ENCODE measurements at regions of chr19 and their contacts with region 1.

Region 1: GRCh38 chr19:11242864-11243797 is 3.7 kb downstream of the ANGPTL8 start:
- DNase-seq: peak; percentile 78
- ATAC-seq: peak; percentile 99
- H3K4me3 ChIP-seq: no peak overlapping the region
- H3K4me3 Mint-ChIP-seq: peak overlapping the region; percentile 27
- H3K27ac ChIP-seq: no peak overlapping the region
- H3K27ac Mint-ChIP-seq: no peak overlapping the region
- H3K4me1 ChIP-seq: peaks cover 3 to 4% of the 10 kb centered on the region in 2 donors
- H3K4me1 Mint-ChIP-seq: peaks cover 6% of the 10 kb centered on the region
- H3K27me3 ChIP-seq: peaks cover 0 to 3% (median 1%) of the 10 kb centered on the region in 4 experiments
- H3K27me3 Mint-ChIP-seq: no peaks in the 10 kb centered on the region
- CTCF ChIP-seq: peak; percentile 76

Region 2: DNA sequence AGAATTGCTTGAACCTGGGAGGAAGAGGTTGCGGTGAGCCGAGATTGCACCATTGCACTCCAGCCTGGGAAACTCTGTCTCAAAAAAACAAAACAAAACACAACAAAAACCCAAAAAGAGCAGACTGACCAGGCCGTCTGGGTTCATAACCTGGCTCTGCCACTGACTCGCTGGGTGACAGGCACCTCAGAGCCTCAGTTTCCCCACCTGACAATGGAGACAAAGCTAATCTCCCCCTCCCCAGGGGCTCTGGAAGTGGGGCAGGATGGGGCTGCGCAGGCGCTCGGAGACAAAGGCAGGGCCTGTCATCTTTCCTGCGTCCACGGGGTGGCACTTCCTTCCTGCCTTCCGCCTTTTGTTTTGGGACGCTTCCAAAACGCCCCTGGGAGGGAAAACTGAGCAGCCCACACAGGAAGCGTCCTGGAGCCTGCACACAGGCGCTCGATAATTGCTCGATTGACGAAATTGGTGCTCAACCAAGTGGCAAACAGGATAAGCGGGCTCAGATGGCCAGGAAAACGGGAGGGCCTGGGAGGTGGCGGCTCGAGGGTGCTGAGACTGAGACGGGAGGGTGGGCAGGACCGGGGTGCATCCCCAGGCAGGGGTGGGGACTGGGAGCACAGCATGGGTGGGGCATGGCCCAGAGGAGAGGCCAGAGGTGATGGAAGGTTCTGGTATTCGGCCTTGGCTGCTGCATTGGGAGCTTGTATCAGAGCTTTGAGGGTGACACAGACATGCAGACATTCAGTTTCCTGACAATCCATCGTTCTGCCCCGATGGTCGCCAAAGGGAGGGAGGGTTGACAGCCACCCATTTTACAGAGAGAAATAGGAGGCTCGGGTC is 105.4 kb before region 1 on chr19:
- CTCF ChIA-PET with region 1: no interaction called
- POLR2A ChIA-PET with region 1: no interaction called
- intact Hi-C with region 1: no loop called
- DNase-seq: peak; percentile 42
- ATAC-seq: peak; percentile 33
- H3K4me3 ChIP-seq: no peak overlapping the region
- H3K4me3 Mint-ChIP-seq: peak overlapping the region; percentile 49
- H3K27ac ChIP-seq: no peak overlapping the region
- H3K27ac Mint-ChIP-seq: no peak overlapping the region
- H3K4me1 ChIP-seq: peaks cover 7 to 17% of the 10 kb centered on the region in 2 donors
- H3K4me1 Mint-ChIP-seq: peaks cover 12% of the 10 kb centered on the region
- H3K27me3 ChIP-seq: peaks cover 0 to 39% (median 8%) of the 10 kb centered on the region in 4 experiments
- H3K27me3 Mint-ChIP-seq: peaks cover 19% of the 10 kb centered on the region
- CTCF ChIP-seq: peak; percentile 39

Region 3: DNA sequence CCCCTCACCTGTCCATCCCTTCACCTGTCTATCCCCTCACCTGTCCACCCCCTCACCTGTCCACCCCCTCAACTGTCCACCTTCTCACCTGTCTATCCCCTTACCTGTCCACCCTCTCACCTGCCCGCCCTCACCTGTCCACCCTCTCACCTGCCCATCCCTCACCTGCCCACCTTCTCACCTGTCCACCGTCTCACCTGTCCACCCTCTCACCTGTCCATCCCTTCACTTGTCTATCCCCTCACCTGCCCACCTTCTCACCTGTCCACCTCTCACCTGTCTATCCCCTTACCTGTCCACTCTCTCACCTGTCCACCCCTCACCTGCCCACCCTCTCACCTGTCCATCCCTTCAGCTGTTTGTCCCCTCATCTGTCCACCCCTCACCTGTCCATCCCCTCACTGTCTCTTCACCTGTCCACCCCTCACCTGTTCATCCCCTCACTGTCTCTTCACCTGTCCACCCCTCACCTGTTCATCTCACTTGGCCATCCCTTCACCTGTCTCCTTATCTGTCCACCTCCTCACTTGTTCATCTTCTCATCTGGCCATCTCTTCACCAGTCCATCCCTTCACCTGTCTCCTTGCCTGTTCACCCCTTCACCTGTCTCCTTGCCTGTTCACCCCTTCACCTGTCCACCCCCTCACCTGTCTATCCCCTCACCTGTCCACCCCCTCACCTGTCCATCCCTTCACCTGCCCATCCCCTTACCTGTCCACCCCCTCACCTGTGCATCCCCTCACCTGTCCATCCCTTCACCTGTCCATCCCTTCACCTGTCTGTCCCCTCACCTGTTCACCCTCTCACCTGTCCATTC is 33.1 kb before region 1 on chr19:
- CTCF ChIA-PET with region 1: no interaction called
- POLR2A ChIA-PET with region 1: no interaction called
- intact Hi-C with region 1: no loop called
- DNase-seq: no peak
- ATAC-seq: no peak
- H3K4me3 ChIP-seq: no peak overlapping the region
- H3K4me3 Mint-ChIP-seq: no peak overlapping the region
- H3K27ac ChIP-seq: no peak overlapping the region
- H3K27ac Mint-ChIP-seq: no peak overlapping the region
- H3K4me1 ChIP-seq: peaks cover 0 to 8% of the 10 kb centered on the region in 2 donors
- H3K4me1 Mint-ChIP-seq: peaks cover 6% of the 10 kb centered on the region
- H3K27me3 ChIP-seq: no peaks in the 10 kb centered on the region
- H3K27me3 Mint-ChIP-seq: no peaks in the 10 kb centered on the region
- CTCF ChIP-seq: no peak

Region 4: DNA sequence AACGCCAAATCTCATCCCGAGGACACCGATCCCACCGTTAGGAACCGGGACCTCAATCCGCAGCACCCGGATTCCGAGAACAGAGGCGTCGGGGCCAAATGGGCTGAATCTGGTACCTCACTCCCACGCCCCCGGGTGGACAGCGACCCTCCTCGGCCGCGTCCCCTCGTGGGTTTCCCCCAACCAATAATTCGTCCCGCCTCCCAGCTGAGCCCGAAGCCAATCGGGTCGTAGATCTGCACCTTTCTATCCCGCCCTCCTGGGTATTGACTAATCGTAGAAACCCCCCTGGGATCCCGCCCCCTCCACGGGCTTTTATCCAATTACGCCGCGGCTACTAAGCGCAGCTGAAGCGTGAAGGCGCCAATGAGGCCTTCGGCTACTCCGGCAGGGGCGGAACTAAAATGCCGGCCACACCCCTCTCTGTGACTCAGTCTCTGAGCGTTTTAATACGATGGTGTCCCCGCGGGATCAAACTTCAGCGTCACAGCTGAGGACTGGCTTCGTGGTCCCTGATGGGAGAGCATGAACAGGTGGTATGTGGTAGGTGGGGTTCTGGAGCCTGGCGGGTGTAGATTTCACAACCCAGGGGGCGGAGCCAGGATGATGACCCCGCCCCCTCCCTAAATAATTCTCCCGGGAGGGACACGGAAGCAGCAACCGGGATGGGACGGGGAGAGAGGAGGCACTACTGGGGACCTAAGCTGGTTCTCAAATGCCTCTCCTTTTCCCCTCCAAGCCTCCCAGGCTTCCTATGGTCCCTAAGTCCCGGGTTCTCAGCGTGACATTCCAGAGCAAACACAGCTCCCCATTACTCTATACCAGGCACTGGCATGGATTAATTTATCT is 103.2 kb after region 1 on chr19 and contains the starts of genes CCDC159 and TMEM205:
- CTCF ChIA-PET with region 1: no interaction called
- POLR2A ChIA-PET with region 1: no interaction called
- intact Hi-C with region 1: loop called (anchors 1 kb)
- DNase-seq: peak; percentile 99
- ATAC-seq: peak; percentile 97
- H3K4me3 ChIP-seq: peak within 1 kb of the TSS; percentile 67 to 97 (median 94)
- H3K4me3 Mint-ChIP-seq: peak within 1 kb of the TSS; percentile 99
- H3K27ac ChIP-seq: peak within 1 kb of the TSS; percentile 71 to 86
- H3K27ac Mint-ChIP-seq: peak within 1 kb of the TSS; percentile 96
- H3K4me1 ChIP-seq: peaks cover 11 to 20% of the 10 kb centered on the region in 2 donors
- H3K4me1 Mint-ChIP-seq: peaks cover 28% of the 10 kb centered on the region
- H3K27me3 ChIP-seq: no peaks in the 10 kb centered on the region
- H3K27me3 Mint-ChIP-seq: no peaks in the 10 kb centered on the region
- CTCF ChIP-seq: no peak
- total RNA-seq, gene CCDC159: 56.0 and 57.5 TPM in 2 replicates
- total RNA-seq, gene TMEM205: 48.5 and 53.4 TPM in 2 replicates

Region 5: DNA sequence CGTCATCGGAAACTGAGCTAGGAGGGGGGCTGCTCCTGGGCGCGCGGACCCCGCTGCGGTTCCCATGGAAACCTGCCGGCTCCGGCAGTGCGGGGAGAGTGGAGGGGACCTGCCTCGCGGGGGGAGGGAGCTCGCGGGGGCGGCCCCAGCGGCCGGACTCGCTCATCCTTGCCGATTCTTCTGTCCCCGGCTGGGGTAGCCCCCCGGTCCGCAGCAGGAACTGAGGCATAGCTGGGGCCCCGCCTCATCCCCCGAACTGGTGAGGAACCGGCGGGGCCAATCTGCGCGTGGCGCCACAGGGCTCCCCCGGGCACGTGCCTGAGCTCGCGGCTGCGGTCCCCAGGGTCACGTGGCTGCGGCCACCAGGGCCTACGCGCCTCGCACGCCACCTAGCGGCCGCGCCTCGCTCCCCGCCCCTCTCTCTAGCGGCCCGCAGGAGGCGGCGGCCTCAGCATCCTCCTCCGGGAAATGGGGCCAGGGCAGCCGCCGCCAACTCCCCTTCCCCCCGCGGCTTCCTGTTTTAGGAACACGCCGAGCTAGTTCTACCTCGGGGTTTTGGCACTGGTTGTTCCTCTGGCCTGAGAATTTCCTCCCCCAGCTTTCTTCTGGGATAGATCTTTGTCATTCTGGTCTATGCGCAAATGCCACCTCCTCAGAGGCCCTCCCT is 239.4 kb after region 1 on chr19:
- CTCF ChIA-PET with region 1: interaction called, 13 read pairs
- POLR2A ChIA-PET with region 1: no interaction called
- intact Hi-C with region 1: loop called (anchors 1 kb)
- DNase-seq: peak; percentile 93
- ATAC-seq: peak; percentile 79
- H3K4me3 ChIP-seq: peak overlapping the region in 4 of 5 experiments; percentile 20 to 48 (median 30)
- H3K4me3 Mint-ChIP-seq: peak overlapping the region; percentile 80
- H3K27ac ChIP-seq: no peak overlapping the region
- H3K27ac Mint-ChIP-seq: peak overlapping the region; percentile 80
- H3K4me1 ChIP-seq: peaks cover 37 to 42% of the 10 kb centered on the region in 2 donors
- H3K4me1 Mint-ChIP-seq: peaks cover 27% of the 10 kb centered on the region
- H3K27me3 ChIP-seq: peaks cover 0 to 46% (median 25%) of the 10 kb centered on the region in 4 experiments
- H3K27me3 Mint-ChIP-seq: peaks cover 34% of the 10 kb centered on the region
- CTCF ChIP-seq: peak; percentile 93

Measured in B cell (primary cell).